ENCODE measurements at regions of chr20 and their contacts with region 1.

Region 1: GRCh38 chr20:38875175-38875993 is 50.8 kb upstream of the FAM83D start:
- DNase-seq: peak; percentile 65
- ATAC-seq: peak; percentile 17
- H3K4me3 Mint-ChIP-seq: peak overlapping the region; percentile 63
- H3K27ac Mint-ChIP-seq: peak overlapping the region; percentile 96
- H3K4me1 Mint-ChIP-seq: peaks cover 89% of the 10 kb centered on the region
- H3K27me3 Mint-ChIP-seq: no peaks in the 10 kb centered on the region

Region 2: GRCh38 chr20:38805502-38805957 is 69.9 kb before region 1 on chr20 and contains the start of gene PPP1R16B:
- CTCF ChIA-PET with region 1: interaction called, 6 read pairs
- POLR2A ChIA-PET with region 1: interaction called, 7 read pairs
- intact Hi-C with region 1: loop called (anchors 1 kb)
- DNase-seq: peak; percentile 86
- ATAC-seq: peak; percentile 79
- H3K4me3 Mint-ChIP-seq: peak within 1 kb of the TSS; percentile 86
- H3K27ac Mint-ChIP-seq: peak within 1 kb of the TSS; percentile 93
- H3K4me1 Mint-ChIP-seq: peaks cover 46% of the 10 kb centered on the region
- H3K27me3 Mint-ChIP-seq: no peaks in the 10 kb centered on the region
- total RNA-seq, gene PPP1R16B: 78.8 to 84.0 TPM

Region 3: GRCh38 chr20:38833857-38834164 is 41.6 kb before region 1 on chr20:
- CTCF ChIA-PET with region 1: interaction called, 5 read pairs
- POLR2A ChIA-PET with region 1: interaction called, 6 read pairs
- intact Hi-C with region 1: loop called (anchors 1 kb)
- DNase-seq: peak; percentile 60
- ATAC-seq: peak; percentile 42
- H3K4me3 Mint-ChIP-seq: peak overlapping the region; percentile 8
- H3K27ac Mint-ChIP-seq: peak overlapping the region; percentile 95
- H3K4me1 Mint-ChIP-seq: peaks cover 72% of the 10 kb centered on the region
- H3K27me3 Mint-ChIP-seq: no peaks in the 10 kb centered on the region

Region 4: GRCh38 chr20:38842558-38842981 is 32.8 kb before region 1 on chr20:
- CTCF ChIA-PET with region 1: interaction called, 10 read pairs
- POLR2A ChIA-PET with region 1: interaction called, 9 read pairs
- intact Hi-C with region 1: loop called (anchors 1 kb)
- DNase-seq: peak; percentile 87
- ATAC-seq: peak; percentile 66
- H3K4me3 Mint-ChIP-seq: peak overlapping the region; percentile 71
- H3K27ac Mint-ChIP-seq: peak overlapping the region; percentile 97
- H3K4me1 Mint-ChIP-seq: peaks cover 87% of the 10 kb centered on the region
- H3K27me3 Mint-ChIP-seq: no peaks in the 10 kb centered on the region

Region 5: GRCh38 chr20:38857703-38858102 is 17.7 kb before region 1 on chr20:
- CTCF ChIA-PET with region 1: interaction called, 13 read pairs
- POLR2A ChIA-PET with region 1: interaction called, 4 read pairs
- intact Hi-C with region 1: loop called in 1 of 2 experiments (anchors 2 kb)
- DNase-seq: no peak
- ATAC-seq: no peak
- H3K4me3 Mint-ChIP-seq: no peak overlapping the region
- H3K27ac Mint-ChIP-seq: peak overlapping the region; percentile 64
- H3K4me1 Mint-ChIP-seq: peaks cover 83% of the 10 kb centered on the region
- H3K27me3 Mint-ChIP-seq: no peaks in the 10 kb centered on the region

Region 6: DNA sequence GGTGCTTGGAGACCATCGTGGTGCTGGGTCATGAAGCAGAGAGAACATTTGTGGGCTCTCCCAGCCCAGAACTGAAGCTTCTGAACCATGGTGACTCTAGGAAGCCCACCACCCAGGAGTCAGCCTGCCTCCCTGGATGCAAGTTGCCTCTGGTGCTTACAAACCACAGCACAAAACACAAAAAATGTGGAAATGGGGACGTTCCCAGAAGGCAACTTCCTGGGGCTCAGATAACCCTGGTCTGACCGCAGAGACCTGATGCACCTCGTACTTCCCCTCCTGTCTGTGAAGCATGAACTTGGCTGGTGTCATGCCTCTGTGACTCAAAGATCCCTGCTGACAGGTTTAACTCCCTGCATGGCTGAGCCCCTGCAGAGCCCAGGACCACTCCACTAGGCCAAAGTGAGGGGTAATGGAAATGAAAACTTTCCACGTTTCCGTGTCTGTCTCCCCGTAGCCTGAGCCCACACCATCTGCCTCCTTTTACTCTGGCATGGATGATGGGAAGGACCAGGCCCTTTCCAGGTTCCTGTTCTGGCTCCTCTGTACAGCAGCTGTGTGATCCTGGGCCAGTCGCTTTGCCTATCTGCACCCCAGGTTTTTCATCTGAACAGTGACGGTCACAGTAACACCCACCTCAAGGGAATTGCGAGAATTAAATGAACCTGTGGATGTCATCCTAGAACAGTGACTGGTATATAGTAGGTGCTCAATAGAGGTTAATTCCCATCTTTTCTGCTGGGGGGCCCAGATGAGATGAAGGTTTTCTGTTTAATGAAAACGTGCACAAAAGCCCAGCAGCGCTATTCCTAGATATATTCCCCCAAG is 12.1 kb before region 1 on chr20:
- CTCF ChIA-PET with region 1: interaction called, 13 read pairs
- POLR2A ChIA-PET with region 1: interaction called, 4 read pairs
- intact Hi-C with region 1: loop called (anchors 1 kb)
- DNase-seq: peak; percentile 79
- ATAC-seq: peak; percentile 91
- H3K4me3 Mint-ChIP-seq: peak overlapping the region; percentile 3
- H3K27ac Mint-ChIP-seq: peak overlapping the region; percentile 77
- H3K4me1 Mint-ChIP-seq: peaks cover 56% of the 10 kb centered on the region
- H3K27me3 Mint-ChIP-seq: no peaks in the 10 kb centered on the region

Region 7: DNA sequence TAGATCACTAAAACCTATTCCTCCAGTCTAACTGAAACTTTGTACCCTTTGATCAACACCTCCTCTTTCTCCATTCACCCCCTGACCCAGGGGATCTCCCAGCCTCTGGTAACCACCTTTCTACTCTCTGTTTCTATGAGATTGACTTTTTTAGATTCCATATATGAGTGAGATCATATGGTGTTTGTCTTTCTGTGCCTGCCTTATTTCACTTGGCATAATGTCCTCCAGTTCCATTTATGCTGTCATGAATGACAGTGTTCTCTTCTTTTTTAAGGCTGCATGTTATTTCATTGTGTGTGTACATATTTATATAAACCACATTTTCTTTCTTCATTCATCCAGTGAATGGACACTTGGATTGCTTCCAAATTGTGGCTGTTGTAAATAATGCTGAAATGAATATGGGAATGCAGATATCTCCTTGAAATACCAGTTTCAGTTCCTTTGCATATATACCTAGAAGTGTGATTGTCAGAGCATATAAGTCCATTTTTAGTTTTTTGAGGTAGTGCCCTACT is 144.5 kb after region 1 on chr20:
- CTCF ChIA-PET with region 1: no interaction called
- POLR2A ChIA-PET with region 1: no interaction called
- intact Hi-C with region 1: loop called in 1 of 2 experiments (anchors 2 kb)
- DNase-seq: peak; percentile 74
- ATAC-seq: peak; percentile 89
- H3K4me3 Mint-ChIP-seq: no peak overlapping the region
- H3K27ac Mint-ChIP-seq: peak overlapping the region; percentile 55
- H3K4me1 Mint-ChIP-seq: peaks cover 57% of the 10 kb centered on the region
- H3K27me3 Mint-ChIP-seq: no peaks in the 10 kb centered on the region

Measured in activated CD4-positive, alpha-beta T cell treated with anti-CD3 and anti-CD28 coated beads for 36 hours (primary cell).